AG04450 (cell line): ENCODE measurements at regions of chr14 and their contacts with region 1.

Region 1: DNA sequence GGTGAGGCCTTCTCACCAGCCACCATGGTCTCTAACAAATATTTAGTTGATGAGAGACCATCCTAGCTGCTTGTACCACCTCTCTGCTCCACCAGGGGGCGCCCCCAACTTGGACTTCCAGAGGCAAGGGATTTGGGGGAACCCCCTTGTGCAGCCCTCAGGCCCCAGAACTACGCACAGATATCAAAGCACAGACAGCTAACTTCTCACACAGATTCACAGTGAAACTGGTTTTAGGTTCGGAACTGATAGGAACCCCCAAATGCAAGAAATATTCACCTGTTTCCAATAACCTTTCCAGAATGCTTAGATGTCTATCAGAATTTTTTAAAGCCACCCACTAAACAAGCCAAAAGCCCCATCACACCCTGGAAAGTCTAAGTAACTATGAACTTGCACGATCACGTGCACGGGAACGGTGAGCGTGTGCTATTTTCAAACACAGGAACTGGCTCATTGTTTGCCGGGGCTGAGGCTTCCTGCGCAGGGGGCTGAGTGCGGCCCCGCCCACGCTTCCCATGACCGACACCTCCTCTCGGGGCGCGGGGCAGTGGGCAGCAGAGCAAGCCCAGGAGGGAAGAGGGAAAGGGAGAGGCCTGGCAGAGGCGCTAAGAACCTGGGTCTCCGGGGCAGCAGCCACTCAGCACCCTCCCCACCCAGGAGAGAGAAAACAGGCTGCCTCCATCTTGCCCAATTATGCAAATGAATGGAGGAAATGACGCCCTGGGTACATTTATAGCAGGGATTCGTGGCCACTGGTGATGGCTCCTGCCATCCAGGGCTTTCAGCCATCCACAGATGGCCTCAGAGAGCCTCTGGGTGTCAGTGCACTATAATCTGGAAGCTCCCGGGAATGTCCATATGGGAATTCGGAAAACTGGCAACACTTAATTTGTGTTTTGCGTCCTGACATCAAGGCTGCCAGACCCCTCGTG is 79.4 kb upstream of the GPR68 start:
- DNase-seq: peak; percentile 13
- H3K4me3 ChIP-seq: 0 out of 2 replicates have a peak overlapping the region, but pooled peaks have one; percentile 3
- H3K27ac ChIP-seq: no peak overlapping the region
- H3K27me3 ChIP-seq: peaks cover 21% of the 10 kb centered on the region
- CTCF ChIP-seq: peak; percentile 95

Region 2: GRCh38 chr14:91341751-91342154 is 17.8 kb after region 1 on chr14:
- CTCF ChIA-PET with region 1: interaction called, 26 read pairs
- POLR2A ChIA-PET with region 1: interaction called, 4 read pairs
- DNase-seq: no peak
- H3K4me3 ChIP-seq: no peak overlapping the region
- H3K27ac ChIP-seq: no peak overlapping the region
- H3K27me3 ChIP-seq: peaks cover 6% of the 10 kb centered on the region
- CTCF ChIP-seq: no peak

Region 3: DNA sequence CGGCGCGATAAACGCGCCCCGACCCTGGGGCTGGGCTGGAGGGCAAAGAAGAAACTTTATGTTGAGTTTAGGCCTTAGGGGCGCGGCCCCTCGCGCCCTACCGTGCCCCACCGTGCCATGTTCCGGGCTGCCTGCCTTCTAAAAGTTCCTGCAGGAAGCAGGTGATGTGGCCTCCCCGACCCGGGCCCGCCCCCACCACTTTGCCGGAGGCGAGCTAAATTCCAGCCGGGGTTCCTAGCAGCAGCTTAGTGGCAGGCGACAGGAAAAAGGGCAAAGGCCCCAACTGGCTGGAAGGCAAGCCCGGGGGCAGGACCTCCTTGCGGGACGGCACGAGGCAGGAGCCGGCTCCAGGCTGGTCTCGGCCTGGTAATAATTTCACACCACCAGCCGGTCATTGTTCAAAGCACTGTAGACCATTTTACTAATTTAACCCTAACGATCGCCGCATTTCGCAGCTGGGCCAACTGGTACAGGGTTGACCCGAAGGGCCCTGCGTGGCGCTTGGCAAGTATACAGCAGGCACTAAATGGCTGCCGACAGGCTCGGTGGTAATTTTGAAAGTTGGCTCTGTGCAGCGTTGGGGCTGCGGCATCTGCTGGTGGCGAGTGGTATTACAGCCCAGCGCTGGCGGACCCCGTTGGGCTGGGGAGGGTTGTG is 94.6 kb after region 1 on chr14:
- CTCF ChIA-PET with region 1: interaction called, 92 read pairs
- POLR2A ChIA-PET with region 1: no interaction called
- DNase-seq: no peak
- H3K4me3 ChIP-seq: peak overlapping the region; percentile 37; the same call in 1 of the 2 replicates
- H3K27ac ChIP-seq: no peak overlapping the region
- H3K27me3 ChIP-seq: peaks cover 26% of the 10 kb centered on the region
- CTCF ChIP-seq: peak; percentile 91